CD8-positive, alpha-beta memory T cell (primary cell): ENCODE measurements at regions of chr20 and their contacts with region 1.

Region 1: GRCh38 chr20:49256261-49256660 is 21.6 kb downstream of the ZNFX1 start:
- DNase-seq: no peak
- H3K4me3 ChIP-seq: no peak overlapping the region
- H3K4me3 Mint-ChIP-seq: no peak overlapping the region
- H3K27ac ChIP-seq: no peak overlapping the region
- H3K27ac Mint-ChIP-seq: peak overlapping the region in 3 of 8 donors; percentile 40 to 50 (median 42)
- H3K4me1 ChIP-seq: no peaks in the 10 kb centered on the region
- H3K4me1 Mint-ChIP-seq: peaks cover 0 to under 1% (median 0%) of the 10 kb centered on the region in 3 donors
- H3K27me3 ChIP-seq: no peaks in the 10 kb centered on the region
- H3K27me3 Mint-ChIP-seq: peaks cover 0 to 2% of the 10 kb centered on the region in 2 donors

Region 2: DNA sequence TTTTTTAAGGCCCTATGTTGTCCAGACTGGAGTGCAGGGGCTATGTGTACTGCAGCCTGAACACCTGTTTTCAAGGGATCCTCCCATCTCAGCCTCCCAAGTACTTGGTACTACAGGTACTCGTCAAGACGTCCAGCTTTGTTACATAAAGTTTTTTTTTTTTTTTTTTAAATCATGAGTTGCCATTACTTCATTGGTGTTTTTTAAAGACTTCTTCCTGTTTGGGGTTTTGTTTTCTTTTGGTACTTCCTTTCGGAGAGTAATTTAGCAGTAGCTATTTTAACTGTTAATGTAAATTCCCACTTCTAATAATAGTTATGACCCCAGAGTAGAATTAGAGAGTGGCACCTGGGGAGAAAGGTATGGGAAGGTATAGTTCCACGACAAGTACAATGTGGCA is 11.1 kb after region 1 on chr20:
- CTCF ChIA-PET with region 1: no interaction called
- POLR2A ChIA-PET with region 1: interaction called, 12 read pairs
- DNase-seq: no peak
- H3K4me3 ChIP-seq: peak overlapping the region; percentile 32
- H3K4me3 Mint-ChIP-seq: peak overlapping the region; percentile 74 to 86 (median 79)
- H3K27ac ChIP-seq: peak overlapping the region; percentile 25
- H3K27ac Mint-ChIP-seq: peak overlapping the region; percentile 79 to 94 (median 88)
- H3K4me1 ChIP-seq: peaks cover 48% of the 10 kb centered on the region
- H3K4me1 Mint-ChIP-seq: peaks cover 60 to 70% (median 69%) of the 10 kb centered on the region in 3 donors
- H3K27me3 ChIP-seq: no peaks in the 10 kb centered on the region
- H3K27me3 Mint-ChIP-seq: peaks cover 0 to 1% of the 10 kb centered on the region in 2 donors